CD14-positive monocyte (primary cell): ENCODE measurements at regions of chr10 and their contacts with region 1.

Region 1: DNA sequence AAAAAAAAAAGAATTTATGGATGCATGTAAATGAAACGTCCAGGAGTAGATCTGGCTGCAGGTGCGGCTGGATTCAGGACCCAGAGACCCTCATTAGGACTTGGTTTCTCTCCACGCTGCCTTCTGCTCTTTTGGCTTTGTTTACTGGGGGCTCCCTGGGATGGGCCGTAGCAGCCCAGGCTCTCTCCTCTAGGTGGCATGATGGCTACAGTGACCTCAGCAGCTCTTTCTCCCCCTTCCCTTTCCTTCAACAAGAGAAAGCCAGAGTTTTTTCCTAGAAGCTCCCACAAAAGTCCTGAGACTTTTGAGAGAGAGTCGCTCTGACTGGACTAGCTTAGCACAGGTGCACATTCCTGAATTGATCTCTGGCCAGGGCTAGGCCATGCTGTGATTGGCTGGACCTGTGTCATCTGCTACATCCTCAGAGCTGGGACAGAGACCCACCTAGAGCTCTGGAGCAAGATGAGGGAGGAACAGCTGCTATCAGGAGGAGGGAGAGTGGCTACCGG is 67.8 kb upstream of the PDCD4 start:
- DNase-seq: peak; percentile 30 to 50 (median 47)
- H3K4me3 ChIP-seq: no peak overlapping the region
- H3K4me3 Mint-ChIP-seq: no peak overlapping the region
- H3K27ac ChIP-seq: no peak overlapping the region
- H3K27ac Mint-ChIP-seq: peak overlapping the region in 1 of 7 donors; percentile 25
- H3K4me1 ChIP-seq: peaks cover 8 to 17% of the 10 kb centered on the region in 2 donors
- H3K4me1 Mint-ChIP-seq: peaks cover 15% of the 10 kb centered on the region
- H3K27me3 ChIP-seq: no peaks in the 10 kb centered on the region
- H3K27me3 Mint-ChIP-seq: peaks cover 0 to 3% (median 3%) of the 10 kb centered on the region in 3 donors
- CTCF ChIP-seq: peak; percentile 67

Region 2: GRCh38 chr10:110893559-110894179 is 89.8 kb after region 1 on chr10:
- intact Hi-C with region 1: loop called in 1 of 2 experiments (anchors 5 kb)
- DNase-seq: peak; percentile 25 to 55 (median 30)
- H3K4me3 ChIP-seq: no peak overlapping the region
- H3K4me3 Mint-ChIP-seq: no peak overlapping the region
- H3K27ac ChIP-seq: no peak overlapping the region
- H3K27ac Mint-ChIP-seq: no peak overlapping the region
- H3K4me1 ChIP-seq: no peaks in the 10 kb centered on the region
- H3K4me1 Mint-ChIP-seq: peaks cover 4% of the 10 kb centered on the region
- H3K27me3 ChIP-seq: no peaks in the 10 kb centered on the region
- H3K27me3 Mint-ChIP-seq: no peaks in the 10 kb centered on the region
- CTCF ChIP-seq: peak; percentile 69